ENCODE measurements at regions of chr4 and their contacts with region 1.

Region 1: GRCh38 chr4:781493-782216 is 44.3 kb downstream of the CPLX1 start:
- DNase-seq: peak; percentile 99
- H3K4me3 Mint-ChIP-seq: peak overlapping the region; percentile 83
- H3K27ac Mint-ChIP-seq: peak overlapping the region; percentile 87
- H3K4me1 Mint-ChIP-seq: peaks cover 55% of the 10 kb centered on the region
- H3K27me3 Mint-ChIP-seq: peaks cover 16% of the 10 kb centered on the region

Region 2: DNA sequence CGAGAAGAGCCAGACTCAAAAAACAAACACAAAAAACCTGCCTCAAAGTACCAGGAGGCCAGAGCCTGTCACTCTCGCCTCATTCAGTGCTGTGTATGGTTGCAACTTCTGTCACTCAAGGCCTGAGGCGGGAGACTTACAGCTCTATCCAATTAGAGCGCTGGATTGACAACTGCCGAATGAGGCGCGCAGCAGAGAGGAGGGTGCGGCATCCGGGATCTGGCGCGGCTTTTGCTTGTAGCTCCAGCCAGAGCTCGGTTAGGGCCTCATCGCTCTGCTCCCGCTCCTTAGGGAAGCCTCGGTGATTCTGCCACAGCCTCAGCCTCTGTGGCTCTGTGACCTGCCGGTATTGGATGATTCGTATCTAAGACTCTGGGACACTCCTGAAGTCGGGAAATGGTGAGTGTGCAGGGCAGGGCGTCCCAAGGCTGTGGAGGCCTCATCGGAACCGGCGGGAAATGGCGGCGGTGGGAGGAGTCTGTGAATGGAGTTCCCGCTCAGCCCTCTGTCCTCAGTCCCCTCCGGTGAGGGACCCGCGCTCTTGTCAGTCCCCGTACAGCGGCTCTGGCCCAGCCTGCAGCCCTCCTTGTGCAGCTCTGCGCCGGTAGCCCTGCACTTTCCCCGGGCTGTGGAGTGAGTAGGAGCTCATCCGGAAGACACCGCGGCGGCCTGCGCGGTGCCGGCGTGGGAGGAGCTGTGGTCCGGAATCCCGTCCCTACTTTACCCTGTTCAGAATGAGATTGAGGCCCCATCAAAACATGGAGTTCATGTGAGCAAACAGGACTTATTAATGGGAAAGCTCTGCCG is 657.2 kb before region 1 on chr4 and contains the start of gene ZNF718:
- CTCF ChIA-PET with region 1: no interaction called
- intact Hi-C with region 1: loop called (anchors 5 kb)
- DNase-seq: peak; percentile 98
- H3K4me3 Mint-ChIP-seq: peak within 1 kb of the TSS; percentile 90
- H3K27ac Mint-ChIP-seq: peak within 1 kb of the TSS; percentile 98
- H3K4me1 Mint-ChIP-seq: peaks cover 22% of the 10 kb centered on the region
- H3K27me3 Mint-ChIP-seq: no peaks in the 10 kb centered on the region
- total RNA-seq, gene ZNF718: 12.2 to 12.8 TPM

Region 3: GRCh38 chr4:602559-602942 is 179.1 kb before region 1 on chr4:
- CTCF ChIA-PET with region 1: no interaction called
- intact Hi-C with region 1: loop called (anchors 5 kb)
- DNase-seq: peak; percentile 86
- H3K4me3 Mint-ChIP-seq: no peak overlapping the region
- H3K27ac Mint-ChIP-seq: no peak overlapping the region
- H3K4me1 Mint-ChIP-seq: peaks cover 2% of the 10 kb centered on the region
- H3K27me3 Mint-ChIP-seq: peaks cover 12% of the 10 kb centered on the region

Region 4: DNA sequence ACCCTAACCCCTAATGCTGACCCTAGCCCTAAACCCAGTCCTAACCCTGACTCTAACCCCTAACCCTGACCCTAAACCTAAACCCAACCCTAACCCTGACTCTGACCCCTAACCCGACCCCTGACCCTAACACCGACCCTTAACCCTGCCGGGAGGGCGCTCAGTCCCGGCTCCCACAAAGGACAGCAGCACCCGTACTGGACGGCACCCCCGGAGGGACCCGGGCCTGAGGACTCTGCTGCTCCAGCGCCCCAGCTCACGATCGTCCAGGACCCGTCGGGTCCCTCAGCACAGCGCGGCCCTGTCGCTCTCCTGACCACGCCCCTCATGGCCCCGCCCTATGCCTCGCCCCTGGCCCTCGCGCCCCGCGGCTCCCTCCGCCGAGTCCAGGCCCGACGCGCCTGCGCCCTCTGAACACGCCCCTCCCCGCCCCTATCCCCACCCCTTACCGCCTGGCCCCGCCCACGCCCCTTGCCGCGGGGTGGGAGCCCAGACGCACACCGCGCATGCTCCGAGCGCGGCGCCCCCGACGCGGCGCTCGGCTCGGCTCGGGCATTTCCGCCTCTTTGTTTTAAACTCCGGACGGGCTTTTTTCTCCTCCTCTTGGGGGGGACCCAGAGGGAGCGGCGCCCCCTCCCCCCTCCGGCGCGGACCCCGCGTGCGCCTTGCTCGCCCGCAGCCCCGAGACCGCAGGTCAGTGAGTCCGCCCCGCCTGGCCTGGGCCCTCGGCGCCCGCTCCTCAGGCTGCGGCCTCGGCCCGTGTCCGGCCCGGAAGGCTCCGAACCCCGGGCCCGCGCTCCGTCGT is 76.2 kb before region 1 on chr4 and contains the start of gene PCGF3:
- CTCF ChIA-PET with region 1: no interaction called
- intact Hi-C with region 1: loop called (anchors 1 kb)
- DNase-seq: peak; percentile 96
- H3K4me3 Mint-ChIP-seq: peak within 1 kb of the TSS; percentile 76
- H3K27ac Mint-ChIP-seq: no peak within 1 kb of the TSS
- H3K4me1 Mint-ChIP-seq: peaks cover 13% of the 10 kb centered on the region
- H3K27me3 Mint-ChIP-seq: no peaks in the 10 kb centered on the region
- total RNA-seq, gene PCGF3: 24.7 to 25.9 TPM

Region 5: DNA sequence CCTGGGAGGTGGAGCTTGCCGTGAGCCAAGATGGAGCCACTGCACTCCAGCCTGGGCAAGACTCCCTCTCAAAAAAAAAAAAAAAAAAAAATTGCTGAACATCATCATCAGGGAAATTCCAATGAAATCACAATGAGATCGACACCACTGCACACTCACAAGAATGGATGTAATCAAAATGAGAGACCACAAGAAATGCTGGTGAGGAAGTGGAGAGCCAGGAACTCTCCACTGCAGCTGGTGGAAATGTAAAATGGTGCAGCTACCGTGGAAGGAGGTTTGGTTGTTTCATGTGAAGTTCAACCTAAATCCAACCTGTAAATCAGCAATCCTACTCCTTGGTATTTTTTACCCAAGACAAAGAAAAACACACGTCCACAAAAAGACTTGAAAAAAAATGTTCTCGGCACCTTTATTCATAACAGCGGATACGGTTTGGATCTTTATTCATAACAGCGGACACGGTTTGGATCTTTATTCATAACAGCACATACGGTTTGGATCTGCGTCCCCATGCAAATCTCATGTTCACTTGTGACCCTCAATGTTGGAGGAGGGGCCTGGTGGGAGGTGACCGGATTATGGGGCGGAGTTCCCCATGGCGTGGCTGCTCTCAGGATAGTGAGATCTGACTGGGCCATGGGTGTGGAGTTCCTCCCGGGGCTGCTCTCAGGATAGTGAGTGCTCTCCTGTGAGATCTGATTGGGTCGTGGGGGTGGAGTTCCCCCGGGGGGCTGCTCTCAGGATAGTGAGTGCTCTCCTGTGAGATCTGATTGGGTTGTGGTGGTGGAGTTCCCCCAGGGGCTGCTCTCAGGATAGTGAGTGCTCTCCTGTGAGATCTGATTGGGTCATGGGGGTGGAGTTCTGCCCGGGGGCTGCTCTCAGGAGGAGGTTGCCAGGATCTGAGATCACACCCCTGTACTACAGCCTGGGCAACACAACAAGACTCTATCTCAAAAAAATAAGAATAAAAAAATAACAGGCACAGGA is 142.7 kb after region 1 on chr4:
- CTCF ChIA-PET with region 1: no interaction called
- intact Hi-C with region 1: loop called (anchors 1 kb)
- DNase-seq: peak; percentile 65
- H3K4me3 Mint-ChIP-seq: peak overlapping the region; percentile 7
- H3K27ac Mint-ChIP-seq: peak overlapping the region; percentile 90
- H3K4me1 Mint-ChIP-seq: peaks cover 69% of the 10 kb centered on the region
- H3K27me3 Mint-ChIP-seq: no peaks in the 10 kb centered on the region

Region 6: GRCh38 chr4:973431-974397 is 192.1 kb after region 1 on chr4 and contains the start of gene DGKQ:
- CTCF ChIA-PET with region 1: no interaction called
- intact Hi-C with region 1: loop called (anchors 1 kb)
- DNase-seq: peak; percentile 81
- H3K4me3 Mint-ChIP-seq: peak within 1 kb of the TSS; percentile 59
- H3K27ac Mint-ChIP-seq: no peak within 1 kb of the TSS
- H3K4me1 Mint-ChIP-seq: peaks cover 5% of the 10 kb centered on the region
- H3K27me3 Mint-ChIP-seq: no peaks in the 10 kb centered on the region
- total RNA-seq, gene DGKQ: 10.8 to 11.1 TPM

Region 7: DNA sequence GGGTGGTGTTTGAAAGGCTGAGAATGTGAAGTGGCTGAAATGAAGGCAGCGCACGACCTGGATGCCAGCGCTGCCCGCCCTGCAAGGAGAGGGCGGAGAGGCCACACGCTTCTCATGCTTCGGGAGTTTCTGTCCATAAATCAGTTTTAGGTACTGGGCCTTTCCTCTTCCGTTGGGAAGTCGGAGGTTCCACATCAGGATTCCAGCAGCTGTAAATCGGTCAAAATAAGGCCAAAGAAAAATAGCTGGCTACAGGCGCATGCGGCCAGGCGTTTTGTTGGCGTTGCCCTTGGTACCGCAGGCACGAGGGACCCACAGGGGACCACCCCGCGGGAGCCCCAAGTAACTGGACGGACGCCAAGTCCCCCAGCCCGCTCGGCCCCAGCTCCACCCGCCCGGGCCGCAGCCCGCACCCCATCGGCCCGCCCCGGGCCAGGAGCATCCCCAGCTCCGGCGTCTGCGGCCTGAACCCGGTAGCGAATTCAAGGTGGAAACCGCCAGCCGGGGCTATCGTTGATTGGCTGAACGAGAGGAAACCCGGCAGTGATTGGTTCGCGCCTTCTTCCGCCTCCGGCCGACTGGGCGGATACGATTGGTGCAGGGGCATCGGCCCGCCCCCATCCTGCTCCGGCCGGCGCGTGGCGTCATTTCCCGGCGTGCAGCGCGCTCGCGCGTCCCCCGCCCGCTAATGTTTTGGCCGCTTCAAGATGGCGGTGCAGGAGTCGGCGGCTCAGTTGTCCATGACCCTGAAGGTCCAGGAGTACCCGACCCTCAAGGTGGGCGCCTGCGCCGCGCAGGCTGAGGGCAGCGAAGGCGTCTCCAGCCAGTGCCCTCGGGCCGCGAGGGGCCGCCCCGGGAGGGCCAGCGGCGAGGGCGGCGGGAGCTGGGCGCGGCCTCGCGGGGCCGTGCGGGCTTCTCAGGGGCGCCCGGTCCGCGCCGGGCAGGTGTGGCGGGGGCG is 507.8 kb after region 1 on chr4 and contains the start of gene MAEA:
- CTCF ChIA-PET with region 1: no interaction called
- intact Hi-C with region 1: loop called (anchors 1 kb)
- DNase-seq: peak; percentile 98
- H3K4me3 Mint-ChIP-seq: peak within 1 kb of the TSS; percentile 87
- H3K27ac Mint-ChIP-seq: peak within 1 kb of the TSS; percentile 82
- H3K4me1 Mint-ChIP-seq: peaks cover 40% of the 10 kb centered on the region
- H3K27me3 Mint-ChIP-seq: no peaks in the 10 kb centered on the region
- total RNA-seq, gene MAEA: 25.2 to 29.4 TPM